ENCODE measurements at regions of chr1 and their contacts with region 1.

Region 1: GRCh38 chr1:156465747-156466365 is 34.7 kb downstream of the MEF2D start:
- DNase-seq: no peak
- ATAC-seq: peak; percentile 43; the same call in 1 of the 2 replicates
- H3K4me3 ChIP-seq: no peak overlapping the region
- H3K27ac ChIP-seq: no peak overlapping the region
- H3K4me1 ChIP-seq: no peaks in the 10 kb centered on the region
- H3K27me3 ChIP-seq: no peaks in the 10 kb centered on the region
- CTCF ChIP-seq: no peak

Region 2: GRCh38 chr1:156445789-156446263 is 20.0 kb before region 1 on chr1:
- CTCF ChIA-PET with region 1: no interaction called
- POLR2A ChIA-PET with region 1: no interaction called
- in situ Hi-C with region 1: no loop called
- intact Hi-C with region 1: no loop called
- DNase-seq: peak; percentile 67
- ATAC-seq: peak; percentile 94
- H3K4me3 ChIP-seq: no peak overlapping the region
- H3K27ac ChIP-seq: no peak overlapping the region
- H3K4me1 ChIP-seq: no peaks in the 10 kb centered on the region
- H3K27me3 ChIP-seq: peaks cover 10% of the 10 kb centered on the region
- CTCF ChIP-seq: peak; percentile 96

Region 3: GRCh38 chr1:156524481-156524869 is 58.6 kb after region 1 on chr1:
- CTCF ChIA-PET with region 1: no interaction called
- POLR2A ChIA-PET with region 1: no interaction called
- in situ Hi-C with region 1: no loop called
- intact Hi-C with region 1: loop called (anchors 10 kb)
- DNase-seq: no peak
- ATAC-seq: no peak
- H3K4me3 ChIP-seq: no peak overlapping the region
- H3K27ac ChIP-seq: no peak overlapping the region
- H3K4me1 ChIP-seq: no peaks in the 10 kb centered on the region
- H3K27me3 ChIP-seq: no peaks in the 10 kb centered on the region
- CTCF ChIP-seq: no peak

Region 4: DNA sequence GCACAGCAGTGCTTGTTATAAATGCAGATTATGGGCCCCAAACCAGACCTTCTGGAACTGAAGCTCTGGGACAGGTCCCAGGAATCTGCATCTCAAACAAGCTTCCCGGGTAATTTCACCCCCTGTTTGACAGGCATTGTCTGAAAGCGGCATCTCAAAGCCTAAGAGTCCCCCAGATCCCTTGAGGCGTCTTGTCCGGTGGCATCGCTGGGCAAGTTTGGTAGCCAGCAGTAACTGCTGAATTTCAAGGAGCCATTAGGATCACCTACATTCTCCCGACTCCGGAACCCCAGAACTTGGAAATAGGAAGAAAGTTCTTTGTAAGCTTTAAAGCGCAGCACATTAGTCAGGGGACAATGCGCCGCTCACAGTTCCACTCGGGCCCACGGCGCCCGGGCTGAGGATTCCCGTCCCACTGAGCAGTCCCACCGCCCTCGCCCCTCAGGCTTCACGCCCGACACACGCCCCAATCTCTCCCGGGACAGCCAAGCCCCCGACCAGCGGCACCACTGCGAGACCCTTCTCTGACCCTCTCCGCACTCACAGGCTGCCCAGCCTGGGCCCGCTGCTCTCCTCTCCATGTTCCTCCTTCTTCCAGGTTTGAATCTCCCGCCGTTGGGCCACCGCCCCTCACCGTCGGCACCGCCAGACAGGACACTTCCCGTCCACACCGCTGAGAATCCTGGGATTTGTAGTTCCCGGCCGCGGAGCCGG is 106.2 kb after region 1 on chr1 and contains the start of gene IQGAP3:
- CTCF ChIA-PET with region 1: no interaction called
- POLR2A ChIA-PET with region 1: no interaction called
- in situ Hi-C with region 1: no loop called
- intact Hi-C with region 1: loop called (anchors 5 kb)
- DNase-seq: no peak
- ATAC-seq: peak; percentile 99
- H3K4me3 ChIP-seq: peak within 1 kb of the TSS; percentile 77 to 96
- H3K27ac ChIP-seq: peak within 1 kb of the TSS; percentile 73
- H3K4me1 ChIP-seq: peaks cover 10% of the 10 kb centered on the region
- H3K27me3 ChIP-seq: no peaks in the 10 kb centered on the region
- CTCF ChIP-seq: no peak
- total RNA-seq, gene IQGAP3: 25.6 TPM